ENCODE measurements at regions of chr1 and their contacts with region 1.

Region 1: GRCh38 chr1:224644553-224645154 is 28.5 kb downstream of the CNIH3 start:
- DNase-seq: peak in 2 of 3 donors; percentile 48 to 66
- ATAC-seq: peak; percentile 90
- H3K4me3 ChIP-seq: no peak overlapping the region
- H3K4me1 ChIP-seq: no peaks in the 10 kb centered on the region
- CTCF ChIP-seq: peak; percentile 81

Region 2: DNA sequence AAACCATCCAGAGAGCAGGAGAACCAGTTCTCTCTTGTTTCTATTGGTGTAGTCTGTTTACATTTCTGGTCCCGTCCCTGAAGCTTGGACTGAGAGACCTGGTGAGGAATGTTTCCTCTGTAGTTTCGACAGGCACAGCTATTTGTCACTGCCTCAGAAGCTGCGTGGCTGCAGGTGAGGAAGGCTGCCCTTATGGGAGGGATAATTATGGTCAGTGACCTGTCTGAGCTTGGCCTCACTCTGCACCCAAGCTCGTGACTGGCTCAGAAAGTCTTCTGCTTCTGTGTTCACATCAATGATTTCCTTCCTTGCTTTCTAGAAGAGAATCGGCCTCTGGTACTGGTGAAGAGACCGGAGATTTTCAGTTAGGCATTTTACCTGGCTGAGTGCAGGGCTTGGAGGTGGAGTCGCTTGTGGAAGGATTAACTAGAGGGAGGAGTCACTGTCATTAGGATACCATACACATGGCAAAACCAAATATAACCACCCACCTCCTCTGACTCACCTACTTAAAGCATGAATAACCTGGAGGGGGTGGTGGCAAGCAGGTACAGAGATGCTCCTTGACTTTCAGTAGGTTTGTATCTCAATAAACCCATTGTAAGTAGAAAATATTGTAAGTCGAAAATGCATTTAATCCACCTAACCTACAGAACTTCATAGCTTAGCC is 190.1 kb before region 1 on chr1:
- intact Hi-C with region 1: no loop called
- DNase-seq: peak in 2 of 3 donors; percentile 66
- ATAC-seq: peak; percentile 89
- H3K4me3 ChIP-seq: no peak overlapping the region
- H3K4me1 ChIP-seq: peaks cover 25% of the 10 kb centered on the region
- CTCF ChIP-seq: no peak

Region 3: GRCh38 chr1:224594360-224594759 is 50.3 kb before region 1 on chr1:
- intact Hi-C with region 1: no loop called
- DNase-seq: no peak
- ATAC-seq: no peak
- H3K4me3 ChIP-seq: no peak overlapping the region
- H3K4me1 ChIP-seq: no peaks in the 10 kb centered on the region
- CTCF ChIP-seq: no peak

Region 4: GRCh38 chr1:224922404-224923164 is 277.9 kb after region 1 on chr1:
- intact Hi-C with region 1: loop called in 1 of 2 experiments (anchors 10 kb)
- DNase-seq: peak in 1 of 3 donors; percentile 13
- ATAC-seq: peak; percentile 91
- H3K4me3 ChIP-seq: no peak overlapping the region
- H3K4me1 ChIP-seq: no peaks in the 10 kb centered on the region
- CTCF ChIP-seq: no peak

Measured in mucosa of descending colon (tissue), 3 donors.